K562 (cell line): ENCODE measurements at regions of chr17 and their contacts with region 1.

Region 1: GRCh38 chr17:65198653-65199382 is 61.6 kb downstream of the RGS9 start:
- DNase-seq: peak; percentile 62 to 82 (median 76)
- ATAC-seq: peak; percentile 71
- H3K4me3 ChIP-seq: no peak overlapping the region
- H3K27ac ChIP-seq: no peak overlapping the region
- H3K4me1 ChIP-seq: no peaks in the 10 kb centered on the region
- H3K27me3 ChIP-seq: peaks cover 24 to 27% of the 10 kb centered on the region in 2 experiments
- CTCF ChIP-seq: peak; percentile 55 to 85 (median 78); a peak in 5 of 6 replicates
- EP300 ChIP-seq: no peak
- POLR2A ChIP-seq: no peak
- RAD21 ChIP-seq: peak; percentile 80 to 93

Region 2: GRCh38 chr17:64306850-64307463 is 891.9 kb before region 1 on chr17:
- CTCF ChIA-PET with region 1: no interaction called
- POLR2A ChIA-PET with region 1: no interaction called
- in situ Hi-C with region 1: no loop called
- intact Hi-C with region 1: loop called (anchors 10 kb)
- DNase-seq: peak; percentile 67 to 84 (median 69)
- ATAC-seq: peak; percentile 79
- H3K4me3 ChIP-seq: no peak overlapping the region
- H3K27ac ChIP-seq: no peak overlapping the region
- H3K4me1 ChIP-seq: no peaks in the 10 kb centered on the region; a peak in 2 of 5 replicates
- H3K27me3 ChIP-seq: peaks cover 0 to 6% of the 10 kb centered on the region in 2 experiments; a peak in 2 of 5 replicates
- CTCF ChIP-seq: peak; percentile 73 to 85 (median 79)
- EP300 ChIP-seq: no peak
- POLR2A ChIP-seq: no peak
- RAD21 ChIP-seq: peak; percentile 68 to 86

Region 3: DNA sequence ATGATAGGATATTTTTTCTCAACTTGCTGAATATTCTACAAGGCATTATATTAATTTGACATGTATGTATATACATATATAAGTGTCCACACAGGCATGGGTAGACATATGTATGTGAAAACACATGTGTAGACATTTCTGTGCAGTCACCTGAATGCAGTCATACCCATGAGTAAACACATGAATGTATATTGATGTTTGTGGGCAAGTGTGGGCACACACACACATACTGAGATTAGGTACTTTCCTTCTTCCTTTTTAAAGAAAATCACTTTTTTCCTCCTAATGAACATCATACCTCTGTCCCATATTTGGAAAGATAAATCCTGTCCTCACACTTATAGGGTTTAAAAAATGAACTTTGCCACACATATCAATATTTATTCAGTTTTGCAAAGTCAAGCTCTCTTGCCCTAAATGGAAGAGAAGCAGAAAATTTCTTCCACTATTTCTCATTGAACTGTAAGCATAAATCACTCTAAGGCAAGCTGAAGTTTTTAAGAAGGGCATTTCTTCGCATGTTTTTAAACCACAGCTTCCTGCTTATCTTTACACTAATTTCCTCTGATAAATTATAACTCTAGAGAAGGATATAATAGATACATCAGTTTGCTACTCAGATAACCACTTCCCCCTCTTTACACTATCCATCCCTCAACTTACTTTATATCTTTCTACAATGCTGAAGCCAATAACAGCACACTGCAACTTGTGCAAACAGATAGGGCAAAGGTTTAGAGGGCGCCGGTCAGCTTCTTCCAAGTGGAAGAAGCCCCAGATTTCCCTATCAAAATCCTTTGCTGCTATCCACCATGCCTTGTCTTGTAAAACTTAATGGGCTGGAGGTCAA is 229.9 kb before region 1 on chr17:
- CTCF ChIA-PET with region 1: no interaction called
- POLR2A ChIA-PET with region 1: no interaction called
- in situ Hi-C with region 1: loop called (anchors 10 kb)
- intact Hi-C with region 1: loop called (anchors 5 kb)
- DNase-seq: no peak
- ATAC-seq: no peak
- H3K4me3 ChIP-seq: no peak overlapping the region
- H3K27ac ChIP-seq: no peak overlapping the region
- H3K4me1 ChIP-seq: peaks cover 6 to 11% of the 10 kb centered on the region in 2 experiments
- H3K27me3 ChIP-seq: no peaks in the 10 kb centered on the region
- CTCF ChIP-seq: no peak
- EP300 ChIP-seq: no peak
- POLR2A ChIP-seq: no peak
- RAD21 ChIP-seq: no peak

Region 4: DNA sequence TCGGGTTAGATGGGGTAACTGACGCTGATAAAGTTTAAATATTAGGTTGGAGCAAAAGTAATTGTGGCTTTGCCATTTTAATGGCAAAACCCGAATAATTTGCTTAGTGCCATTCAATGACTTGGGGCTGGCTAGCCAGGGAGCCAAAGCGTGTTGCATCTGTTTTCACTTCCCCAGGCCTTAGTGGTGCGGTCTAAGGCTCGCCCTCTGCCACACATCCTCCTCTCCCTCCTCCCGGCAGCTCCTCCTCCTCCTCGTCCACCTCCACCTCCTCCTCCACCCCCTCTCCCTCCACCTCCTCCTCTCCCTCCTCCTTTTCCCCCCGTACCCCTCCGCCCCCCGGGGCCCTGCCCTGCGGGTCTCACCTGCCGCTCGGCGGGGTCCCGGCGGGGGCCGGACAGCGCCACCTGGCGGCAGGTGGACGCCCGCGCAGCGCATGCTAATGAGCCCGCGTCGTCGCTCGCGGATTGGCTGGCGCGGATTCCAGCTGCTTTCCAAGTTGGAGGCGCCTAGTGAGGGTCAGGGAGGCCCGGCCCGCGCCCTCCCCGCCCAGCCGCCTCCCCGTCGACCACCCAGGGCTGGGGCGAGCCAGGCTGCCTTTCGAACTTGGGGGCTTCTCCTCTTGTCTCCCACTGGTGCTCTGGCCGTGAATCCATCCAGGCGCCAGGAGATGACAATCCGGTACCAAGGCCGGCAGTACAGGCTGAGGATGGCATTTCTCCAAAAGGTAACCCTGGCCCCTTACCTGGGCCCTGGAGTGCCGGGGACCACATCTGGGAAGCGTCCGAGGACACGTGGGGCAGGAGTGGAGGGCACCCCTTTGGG is 98.3 kb before region 1 on chr17:
- CTCF ChIA-PET with region 1: interaction called, 4 read pairs
- POLR2A ChIA-PET with region 1: no interaction called
- in situ Hi-C with region 1: no loop called
- intact Hi-C with region 1: loop called (anchors 5 kb)
- DNase-seq: peak; percentile 86 to 90 (median 88)
- ATAC-seq: peak; percentile 98
- H3K4me3 ChIP-seq: peak overlapping the region; percentile 40
- H3K27ac ChIP-seq: no peak overlapping the region
- H3K4me1 ChIP-seq: peaks cover 7 to 11% of the 10 kb centered on the region in 2 experiments; a peak in 3 of 5 replicates
- H3K27me3 ChIP-seq: peaks cover 3 to 18% of the 10 kb centered on the region in 2 experiments; a peak in 3 of 5 replicates
- CTCF ChIP-seq: peak; percentile 80 to 87 (median 86)
- EP300 ChIP-seq: no peak
- POLR2A ChIP-seq: no peak
- RAD21 ChIP-seq: peak; percentile 70 to 73

Region 5: GRCh38 chr17:65137021-65137991 is 61.5 kb before region 1 on chr17 and contains the start of gene RGS9:
- CTCF ChIA-PET with region 1: interaction called, 3 read pairs
- POLR2A ChIA-PET with region 1: no interaction called
- in situ Hi-C with region 1: no loop called
- intact Hi-C with region 1: loop called (anchors 2 kb)
- DNase-seq: peak; percentile 89 to 94 (median 92)
- ATAC-seq: peak; percentile 99
- H3K4me3 ChIP-seq: peak within 1 kb of the TSS; percentile 24
- H3K27ac ChIP-seq: no peak within 1 kb of the TSS
- H3K4me1 ChIP-seq: peaks cover 7 to 10% of the 10 kb centered on the region in 2 experiments; a peak in 4 of 5 replicates
- H3K27me3 ChIP-seq: peaks cover 20 to 41% of the 10 kb centered on the region in 2 experiments
- CTCF ChIP-seq: peak; percentile 90 to 95 (median 93)
- EP300 ChIP-seq: no peak
- POLR2A ChIP-seq: no peak
- RAD21 ChIP-seq: peak; percentile 83
- polyA plus RNA-seq, gene RGS9: 0.38 to 0.55 TPM

Region 6: DNA sequence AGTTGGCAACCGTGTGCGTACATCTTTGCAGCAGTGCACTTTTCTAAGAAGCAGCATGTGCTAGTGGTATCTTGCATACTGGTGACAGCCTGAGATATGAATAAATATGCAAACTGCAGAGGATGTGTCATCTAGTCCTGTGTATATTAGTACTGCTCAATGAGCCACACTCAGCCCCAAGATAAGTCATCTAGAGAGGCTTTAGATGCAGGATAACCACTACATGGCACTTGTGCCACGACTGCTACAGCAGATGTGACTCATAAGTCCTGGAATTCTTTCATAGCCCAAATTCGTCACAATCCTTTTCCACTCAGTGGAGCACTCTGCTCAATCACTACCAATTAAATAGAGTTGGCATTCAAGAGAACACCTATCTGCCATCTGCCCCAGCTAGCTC is 191.1 kb after region 1 on chr17:
- CTCF ChIA-PET with region 1: no interaction called
- POLR2A ChIA-PET with region 1: no interaction called
- in situ Hi-C with region 1: no loop called
- intact Hi-C with region 1: no loop called
- DNase-seq: no peak
- ATAC-seq: no peak
- H3K4me3 ChIP-seq: no peak overlapping the region
- H3K27ac ChIP-seq: no peak overlapping the region
- H3K4me1 ChIP-seq: no peaks in the 10 kb centered on the region
- H3K27me3 ChIP-seq: no peaks in the 10 kb centered on the region
- CTCF ChIP-seq: no peak
- EP300 ChIP-seq: no peak
- POLR2A ChIP-seq: no peak
- RAD21 ChIP-seq: no peak